Heart left ventricle (tissue), 16 donors: ENCODE measurements at regions of chr20 and their contacts with region 1.

Region 1: GRCh38 chr20:54643791-54644190 is 168.4 kb downstream of the DOK5 start:
- DNase-seq: peak in 2 of 5 donors; percentile 30 to 68
- ATAC-seq: peak in 2 of 4 donors; percentile 26 to 49
- H3K4me3 ChIP-seq: no peak overlapping the region
- H3K27ac ChIP-seq: no peak overlapping the region
- H3K4me1 ChIP-seq: no peaks in the 10 kb centered on the region
- H3K27me3 ChIP-seq: no peaks in the 10 kb centered on the region
- CTCF ChIP-seq: no peak
- POLR2A ChIP-seq: no peak

Region 2: GRCh38 chr20:54097236-54097529 is 546.6 kb before region 1 on chr20:
- intact Hi-C with region 1: loop called (anchors 2 to 5 kb)
- DNase-seq: no peak
- ATAC-seq: no peak
- H3K4me3 ChIP-seq: no peak overlapping the region
- H3K27ac ChIP-seq: no peak overlapping the region
- H3K4me1 ChIP-seq: no peaks in the 10 kb centered on the region
- H3K27me3 ChIP-seq: peaks cover 0 to 20% (median 0%) of the 10 kb centered on the region in 9 donors
- CTCF ChIP-seq: no peak
- POLR2A ChIP-seq: no peak

Region 3: GRCh38 chr20:54219751-54220426 is 423.9 kb before region 1 on chr20:
- intact Hi-C with region 1: loop called (anchors 1 to 5 kb)
- DNase-seq: no peak
- ATAC-seq: no peak
- H3K4me3 ChIP-seq: no peak overlapping the region
- H3K27ac ChIP-seq: no peak overlapping the region
- H3K4me1 ChIP-seq: peaks cover 0 to 32% (median 16%) of the 10 kb centered on the region in 12 donors
- H3K27me3 ChIP-seq: no peaks in the 10 kb centered on the region
- CTCF ChIP-seq: peak; percentile 20 to 73 (median 54)
- POLR2A ChIP-seq: no peak

Region 4: GRCh38 chr20:54464003-54464402 is 179.8 kb before region 1 on chr20:
- intact Hi-C with region 1: loop called in 2 of 10 experiments (anchors 5 kb)
- DNase-seq: no peak
- ATAC-seq: no peak
- H3K4me3 ChIP-seq: no peak overlapping the region
- H3K27ac ChIP-seq: no peak overlapping the region
- H3K4me1 ChIP-seq: peaks cover 0 to 6% (median 0%) of the 10 kb centered on the region in 12 donors
- H3K27me3 ChIP-seq: no peaks in the 10 kb centered on the region
- CTCF ChIP-seq: no peak
- POLR2A ChIP-seq: no peak

Region 5: GRCh38 chr20:54566031-54566885 is 77.5 kb before region 1 on chr20:
- intact Hi-C with region 1: no loop called
- DNase-seq: no peak
- ATAC-seq: no peak
- H3K4me3 ChIP-seq: no peak overlapping the region
- H3K27ac ChIP-seq: no peak overlapping the region
- H3K4me1 ChIP-seq: peaks cover 0 to 13% (median 0%) of the 10 kb centered on the region in 12 donors
- H3K27me3 ChIP-seq: no peaks in the 10 kb centered on the region
- CTCF ChIP-seq: no peak
- POLR2A ChIP-seq: no peak